Activated CD4-positive, alpha-beta T cell treated with anti-CD3 and anti-CD28 coated beads for 36 hours (primary cell): ENCODE measurements at regions of chr10 and their contacts with region 1.

Region 1: GRCh38 chr10:31928549-31929260 is at the start of gene ARHGAP12:
- DNase-seq: peak; percentile 87
- ATAC-seq: peak; percentile 52
- H3K4me3 Mint-ChIP-seq: peak within 1 kb of the TSS; percentile 84
- H3K27ac Mint-ChIP-seq: peak within 1 kb of the TSS; percentile 74
- H3K4me1 Mint-ChIP-seq: peaks cover 42% of the 10 kb centered on the region
- H3K27me3 Mint-ChIP-seq: no peaks in the 10 kb centered on the region
- total RNA-seq, gene ARHGAP12: 5.5 to 6.4 TPM

Region 2: DNA sequence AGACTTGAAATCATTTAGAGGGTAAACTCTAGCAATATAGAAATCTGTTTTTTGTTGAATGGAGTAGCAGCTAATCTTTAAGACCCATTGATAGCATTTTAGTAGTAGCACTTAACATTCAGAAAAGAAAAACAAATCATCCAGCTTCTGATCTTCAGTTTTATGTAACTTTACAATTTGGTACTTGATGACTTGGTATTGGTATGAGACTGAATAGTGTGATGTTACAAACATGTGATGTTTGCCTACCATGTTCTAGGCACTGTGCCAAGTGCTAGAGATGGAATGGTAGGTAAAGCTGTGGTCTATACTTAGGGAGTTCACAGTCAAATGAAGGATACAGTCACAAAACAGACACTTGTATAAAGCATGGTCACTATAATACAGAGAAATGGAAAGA is 588.4 kb before region 1 on chr10:
- CTCF ChIA-PET with region 1: no interaction called
- POLR2A ChIA-PET with region 1: no interaction called
- intact Hi-C with region 1: loop called (anchors 10 kb)
- DNase-seq: peak; percentile 52
- ATAC-seq: peak; percentile 45
- H3K4me3 Mint-ChIP-seq: no peak overlapping the region
- H3K27ac Mint-ChIP-seq: no peak overlapping the region
- H3K4me1 Mint-ChIP-seq: peaks cover 22% of the 10 kb centered on the region
- H3K27me3 Mint-ChIP-seq: no peaks in the 10 kb centered on the region

Region 3: GRCh38 chr10:31759799-31760626 is 168.7 kb before region 1 on chr10:
- CTCF ChIA-PET with region 1: no interaction called
- POLR2A ChIA-PET with region 1: no interaction called
- intact Hi-C with region 1: loop called in 1 of 2 experiments (anchors 5 kb)
- DNase-seq: peak; percentile 97
- ATAC-seq: peak; percentile 94
- H3K4me3 Mint-ChIP-seq: peak overlapping the region; percentile 91
- H3K27ac Mint-ChIP-seq: peak overlapping the region; percentile 94
- H3K4me1 Mint-ChIP-seq: peaks cover 15% of the 10 kb centered on the region
- H3K27me3 Mint-ChIP-seq: no peaks in the 10 kb centered on the region

Region 4: GRCh38 chr10:31999064-31999660 is 70.5 kb after region 1 on chr10:
- CTCF ChIA-PET with region 1: no interaction called
- POLR2A ChIA-PET with region 1: no interaction called
- intact Hi-C with region 1: no loop called
- DNase-seq: no peak
- ATAC-seq: no peak
- H3K4me3 Mint-ChIP-seq: no peak overlapping the region
- H3K27ac Mint-ChIP-seq: no peak overlapping the region
- H3K4me1 Mint-ChIP-seq: peaks cover 7% of the 10 kb centered on the region
- H3K27me3 Mint-ChIP-seq: no peaks in the 10 kb centered on the region

Region 5: DNA sequence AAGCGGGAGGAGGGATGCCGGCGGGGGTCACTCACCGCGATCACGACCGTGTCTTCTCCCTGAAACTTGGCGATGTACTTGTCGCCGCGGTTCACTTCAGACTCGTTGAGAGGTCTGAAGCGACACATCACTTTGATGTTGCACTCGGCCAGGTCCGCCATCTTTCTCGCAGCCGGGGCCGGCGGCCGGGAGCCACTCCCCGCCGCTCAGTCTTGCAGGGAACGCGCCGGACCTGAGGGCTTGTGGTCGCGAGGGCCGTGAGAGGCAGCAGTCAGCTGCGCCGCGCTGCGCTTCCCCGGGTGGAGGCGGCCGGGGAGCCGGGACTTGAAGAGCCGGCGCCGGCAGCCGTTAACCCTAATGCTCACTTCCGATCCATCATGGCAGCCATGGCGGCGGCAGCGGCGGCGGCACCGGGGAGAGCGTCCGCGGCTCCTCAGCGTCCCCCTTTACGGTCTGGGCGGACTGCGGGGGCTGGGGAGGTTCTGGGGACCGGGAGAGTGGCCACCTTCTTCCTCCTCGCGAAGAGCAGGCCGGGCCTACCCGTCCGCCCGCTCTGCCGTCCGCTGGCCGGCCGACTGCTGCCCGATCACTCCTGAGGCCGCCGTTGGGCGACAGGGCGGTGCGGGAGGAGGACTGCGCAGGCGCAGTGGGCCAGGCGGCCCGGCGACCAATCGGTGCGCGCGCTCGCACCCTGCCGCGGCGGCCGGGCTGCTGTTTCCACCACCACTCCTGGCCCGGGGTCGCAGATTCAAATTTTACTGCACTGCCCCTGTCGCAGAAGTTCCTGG is 127.3 kb after region 1 on chr10 and contains the start of gene KIF5B:
- CTCF ChIA-PET with region 1: no interaction called
- POLR2A ChIA-PET with region 1: interaction called, 3 read pairs
- intact Hi-C with region 1: loop called (anchors 1 to 5 kb)
- DNase-seq: peak; percentile 92
- ATAC-seq: peak; percentile 92
- H3K4me3 Mint-ChIP-seq: peak within 1 kb of the TSS; percentile 97
- H3K27ac Mint-ChIP-seq: peak within 1 kb of the TSS; percentile 96
- H3K4me1 Mint-ChIP-seq: peaks cover 37% of the 10 kb centered on the region
- H3K27me3 Mint-ChIP-seq: no peaks in the 10 kb centered on the region
- total RNA-seq, gene KIF5B: 57.4 to 59.9 TPM

Region 6: GRCh38 chr10:32445740-32446535 is 517.2 kb after region 1 on chr10 and contains the start of gene CCDC7:
- CTCF ChIA-PET with region 1: no interaction called
- POLR2A ChIA-PET with region 1: no interaction called
- intact Hi-C with region 1: loop called in 1 of 2 experiments (anchors 2 kb)
- DNase-seq: peak; percentile 91
- ATAC-seq: peak; percentile 97
- H3K4me3 Mint-ChIP-seq: peak within 1 kb of the TSS; percentile 82
- H3K27ac Mint-ChIP-seq: peak within 1 kb of the TSS; percentile 99
- H3K4me1 Mint-ChIP-seq: peaks cover 10% of the 10 kb centered on the region
- H3K27me3 Mint-ChIP-seq: no peaks in the 10 kb centered on the region
- total RNA-seq, gene CCDC7: 9.0 TPM